Thyroid gland (tissue), 4 donors: ENCODE measurements at regions of chr14 and their contacts with region 1.

Region 1: GRCh38 chr14:76352639-76353281 is 23.2 kb upstream of the ESRRB start:
- DNase-seq: peak; percentile 42 to 50
- H3K4me3 ChIP-seq: no peak overlapping the region
- H3K27ac ChIP-seq: no peak overlapping the region
- H3K4me1 ChIP-seq: peaks cover 6 to 9% of the 10 kb centered on the region in 2 donors
- H3K27me3 ChIP-seq: no peaks in the 10 kb centered on the region
- CTCF ChIP-seq: peak; percentile 59 to 87 (median 67)
- POLR2A ChIP-seq: no peak

Region 2: DNA sequence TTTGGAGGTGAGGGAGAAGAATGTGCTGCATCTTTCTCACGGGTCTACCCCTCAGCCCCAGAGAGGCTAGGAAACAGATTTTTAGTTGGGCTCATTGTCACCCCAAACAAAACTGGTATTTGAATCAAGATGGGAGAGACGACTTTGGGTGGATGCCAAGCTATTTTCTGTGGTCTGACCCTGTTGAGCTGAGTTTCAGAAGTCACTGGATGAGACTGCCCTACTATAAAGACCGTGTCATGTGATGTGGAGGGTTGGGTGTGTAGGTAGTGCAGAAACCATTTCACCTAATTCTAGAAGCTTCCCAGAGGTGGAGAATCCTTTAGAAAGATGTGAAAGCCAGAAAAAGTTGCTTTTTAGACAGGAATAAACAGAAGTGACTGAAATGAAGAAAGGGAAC is 307.0 kb before region 1 on chr14:
- intact Hi-C with region 1: loop called (anchors 10 kb)
- DNase-seq: no peak
- H3K4me3 ChIP-seq: no peak overlapping the region
- H3K27ac ChIP-seq: no peak overlapping the region
- H3K4me1 ChIP-seq: no peaks in the 10 kb centered on the region
- H3K27me3 ChIP-seq: no peaks in the 10 kb centered on the region
- CTCF ChIP-seq: no peak
- POLR2A ChIP-seq: no peak

Region 3: DNA sequence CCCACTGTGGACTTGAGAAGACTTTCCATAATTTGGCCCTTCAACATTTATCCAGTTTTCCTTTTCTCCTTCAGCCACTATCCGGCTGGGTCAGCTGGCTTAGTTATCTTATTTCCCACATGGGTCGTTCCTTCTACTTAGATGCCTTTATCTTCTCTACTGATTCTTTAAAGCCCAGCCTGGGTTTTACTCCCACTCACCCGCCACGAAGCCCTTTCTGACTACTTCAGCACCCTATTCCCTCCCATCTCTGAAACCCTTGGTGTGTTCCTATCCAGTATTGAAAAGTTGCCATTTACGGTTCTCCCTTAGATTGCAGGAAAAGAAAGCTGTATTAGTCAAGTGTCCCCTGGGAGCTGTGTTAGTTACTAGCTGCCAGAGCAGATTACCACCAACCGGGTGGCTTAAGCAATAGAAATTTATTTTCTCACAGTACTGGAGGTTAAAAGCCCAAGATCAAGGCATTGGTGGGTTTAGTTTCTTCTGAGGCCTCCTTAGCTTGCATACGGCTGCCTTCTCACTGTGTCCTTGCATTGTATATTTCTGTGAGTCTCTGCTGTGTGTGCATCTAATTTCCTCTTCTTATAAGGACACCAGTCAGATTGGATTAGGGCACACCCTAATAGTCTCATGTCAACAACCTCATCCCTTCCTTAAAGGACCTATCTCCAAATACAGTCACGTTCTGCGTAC is 95.5 kb before region 1 on chr14:
- intact Hi-C with region 1: no loop called
- DNase-seq: no peak
- H3K4me3 ChIP-seq: no peak overlapping the region
- H3K27ac ChIP-seq: no peak overlapping the region
- H3K4me1 ChIP-seq: no peaks in the 10 kb centered on the region
- H3K27me3 ChIP-seq: no peaks in the 10 kb centered on the region
- CTCF ChIP-seq: no peak
- POLR2A ChIP-seq: no peak